ENCODE measurements at regions of chr22 and their contacts with region 1.

Region 1: GRCh38 chr22:28600546-28601143 is 79.0 kb downstream of the TTC28 start:
- DNase-seq: peak; percentile 73
- H3K4me3 ChIP-seq: no peak overlapping the region
- H3K27ac ChIP-seq: no peak overlapping the region
- H3K4me1 ChIP-seq: peaks cover 8% of the 10 kb centered on the region
- H3K27me3 ChIP-seq: no peaks in the 10 kb centered on the region
- CTCF ChIP-seq: peak in 1 of 2 donors; percentile 10
- POLR2A ChIP-seq: no peak

Region 2: GRCh38 chr22:28051787-28052356 is 548.8 kb before region 1 on chr22:
- CTCF ChIA-PET with region 1: interaction called, 23 read pairs
- POLR2A ChIA-PET with region 1: no interaction called
- dilution Hi-C with region 1: no loop called
- intact Hi-C with region 1: no loop called
- DNase-seq: peak; percentile 66
- H3K4me3 ChIP-seq: no peak overlapping the region
- H3K27ac ChIP-seq: no peak overlapping the region
- H3K4me1 ChIP-seq: peaks cover 15% of the 10 kb centered on the region
- H3K27me3 ChIP-seq: no peaks in the 10 kb centered on the region
- CTCF ChIP-seq: peak; percentile 85
- POLR2A ChIP-seq: no peak

Region 3: DNA sequence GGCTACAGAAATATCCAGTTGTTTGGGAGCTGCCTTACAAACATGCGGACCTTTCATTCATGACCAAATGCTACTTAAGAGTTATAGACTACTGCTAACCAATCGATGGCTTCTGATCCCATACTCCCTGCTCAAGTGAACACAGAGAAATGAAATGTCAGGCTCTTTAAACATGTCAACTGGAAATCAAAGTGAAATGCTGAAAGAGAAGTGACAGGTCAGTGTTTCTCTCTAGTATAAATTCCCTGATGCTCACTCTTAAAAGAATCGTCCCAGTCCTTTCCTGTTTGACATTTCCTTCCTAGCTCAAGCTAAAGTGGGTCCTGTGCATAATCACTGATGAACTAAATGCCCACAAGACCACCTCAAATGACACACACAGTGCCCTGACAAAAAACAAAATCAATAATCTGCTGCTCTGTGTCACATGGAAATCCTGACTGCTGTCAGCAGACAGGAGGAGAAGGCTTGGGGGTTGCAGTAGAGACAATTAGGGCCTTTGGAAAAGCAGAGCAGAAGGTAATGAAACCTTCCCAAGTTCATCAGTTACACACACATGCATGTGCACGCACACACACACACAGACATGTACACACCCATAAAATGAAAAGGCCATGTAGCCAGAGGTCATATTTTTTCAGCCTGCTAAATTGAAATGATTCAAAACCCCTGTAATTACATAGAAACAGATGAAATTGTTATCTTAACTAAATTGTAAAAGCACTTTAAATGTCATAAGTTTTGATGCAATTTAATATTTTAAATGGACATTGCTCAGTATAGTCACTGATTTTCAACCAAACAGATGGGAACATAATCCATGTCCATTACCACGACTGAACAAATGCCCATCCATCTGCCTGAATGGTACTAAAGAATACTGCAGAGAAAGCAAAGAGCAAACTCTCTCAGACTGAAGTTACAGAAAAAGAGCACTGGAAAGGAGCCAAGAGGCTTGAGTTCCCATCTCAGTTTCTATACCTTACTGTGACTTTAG is 251.7 kb before region 1 on chr22:
- CTCF ChIA-PET with region 1: no interaction called
- POLR2A ChIA-PET with region 1: no interaction called
- dilution Hi-C with region 1: no loop called
- intact Hi-C with region 1: no loop called
- DNase-seq: no peak
- H3K4me3 ChIP-seq: no peak overlapping the region
- H3K27ac ChIP-seq: no peak overlapping the region
- H3K4me1 ChIP-seq: no peaks in the 10 kb centered on the region
- H3K27me3 ChIP-seq: no peaks in the 10 kb centered on the region
- CTCF ChIP-seq: no peak
- POLR2A ChIP-seq: no peak

Region 4: DNA sequence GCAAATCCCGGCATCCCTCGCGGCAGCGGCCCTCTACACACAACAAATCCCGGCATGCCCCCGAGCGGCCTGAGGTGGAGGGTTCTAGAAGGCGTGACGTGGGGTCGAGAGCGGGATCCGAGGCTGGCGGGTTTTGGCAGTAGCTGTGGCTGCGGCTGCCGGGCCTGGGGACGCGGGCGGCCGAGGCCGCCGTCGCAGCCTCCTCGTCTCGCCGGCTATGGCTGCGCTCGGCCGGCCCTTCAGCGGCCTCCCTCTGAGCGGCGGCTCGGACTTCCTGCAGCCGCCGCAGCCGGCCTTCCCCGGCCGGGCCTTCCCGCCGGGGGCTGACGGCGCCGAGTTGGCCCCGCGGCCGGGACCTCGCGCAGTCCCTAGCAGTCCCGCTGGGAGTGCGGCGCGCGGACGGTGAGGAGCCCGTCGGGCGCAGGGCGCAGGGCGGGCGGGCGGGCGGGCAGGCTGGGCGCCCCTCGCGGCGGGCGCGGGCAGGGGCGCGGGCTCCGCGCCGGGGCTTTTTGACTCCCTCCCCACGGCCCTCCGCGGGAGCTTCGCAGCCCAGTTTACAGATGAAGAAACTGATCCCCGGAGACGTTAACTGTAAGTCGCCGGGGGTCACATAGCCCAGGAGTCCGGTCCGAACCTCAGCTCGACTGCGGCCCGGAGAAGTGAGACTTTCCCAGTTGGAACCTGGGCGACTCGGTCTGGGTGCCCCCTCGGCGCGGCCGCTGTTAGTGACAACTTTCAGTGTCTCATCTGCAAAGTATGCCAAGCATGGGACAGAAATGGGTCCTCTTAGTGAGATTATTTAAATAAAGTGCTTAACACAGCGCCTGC is 172.2 kb after region 1 on chr22 and contains the start of gene CCDC117:
- CTCF ChIA-PET with region 1: interaction called, 23 read pairs
- POLR2A ChIA-PET with region 1: interaction called, 3 read pairs
- dilution Hi-C with region 1: no loop called
- intact Hi-C with region 1: loop called (anchors 2 kb)
- DNase-seq: peak; percentile 94
- H3K4me3 ChIP-seq: peak within 1 kb of the TSS; percentile 31 to 85 (median 51)
- H3K27ac ChIP-seq: peak within 1 kb of the TSS; percentile 79
- H3K4me1 ChIP-seq: peaks cover 4% of the 10 kb centered on the region
- H3K27me3 ChIP-seq: no peaks in the 10 kb centered on the region
- CTCF ChIP-seq: peak; percentile 28 to 37
- POLR2A ChIP-seq: peak; percentile 93
- total RNA-seq, gene CCDC117: 22.8 and 23.3 TPM in 2 replicates

Region 5: DNA sequence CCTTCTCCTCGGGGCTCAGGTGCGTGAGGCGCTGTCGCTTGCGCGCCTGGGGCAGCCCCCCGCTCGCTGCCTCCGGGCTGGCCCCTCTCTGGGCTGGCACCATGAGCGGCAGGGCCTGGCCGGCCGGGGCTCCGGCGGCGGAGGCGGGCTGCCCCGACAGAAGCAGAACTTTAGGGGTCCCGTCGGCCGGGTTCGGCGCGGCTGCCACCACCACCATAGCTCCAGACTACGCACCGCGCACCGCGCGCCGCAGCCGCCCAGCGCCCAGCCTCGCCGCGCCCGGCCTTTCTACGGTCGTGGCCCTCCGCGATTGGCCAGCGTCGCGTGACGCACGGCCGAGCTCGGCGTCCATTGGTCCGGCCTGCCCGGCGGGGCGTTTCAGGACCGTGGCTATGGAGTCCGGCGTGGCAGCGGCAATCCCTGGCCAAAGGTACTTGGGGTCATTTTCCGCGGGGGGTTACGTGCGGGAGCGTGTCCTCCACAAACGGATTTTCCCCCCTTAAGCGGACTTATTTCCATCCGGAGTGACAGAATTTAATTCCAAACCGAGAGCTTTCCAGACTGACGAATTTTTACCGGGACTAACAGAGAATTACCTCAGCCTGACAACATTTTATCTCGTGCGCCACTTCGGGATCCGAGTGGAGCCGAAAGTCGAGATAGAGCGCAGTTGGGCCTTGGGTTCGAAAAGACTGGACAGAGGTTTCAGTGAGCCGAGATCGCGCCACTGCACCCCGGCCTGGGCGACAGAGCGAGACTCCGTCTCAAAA is 199.8 kb after region 1 on chr22 and contains the start of gene XBP1:
- CTCF ChIA-PET with region 1: interaction called, 18 read pairs
- POLR2A ChIA-PET with region 1: no interaction called
- dilution Hi-C with region 1: no loop called
- intact Hi-C with region 1: no loop called
- DNase-seq: peak; percentile 95
- H3K4me3 ChIP-seq: peak within 1 kb of the TSS; percentile 84 to 100 (median 100)
- H3K27ac ChIP-seq: peak within 1 kb of the TSS; percentile 100
- H3K4me1 ChIP-seq: peaks cover 26% of the 10 kb centered on the region
- H3K27me3 ChIP-seq: no peaks in the 10 kb centered on the region
- CTCF ChIP-seq: no peak
- POLR2A ChIP-seq: peak; percentile 94
- total RNA-seq, gene XBP1: 90.4 and 103 TPM in 2 replicates

Region 6: GRCh38 chr22:28829358-28830181 is 228.9 kb after region 1 on chr22:
- CTCF ChIA-PET with region 1: interaction called, 246 read pairs
- POLR2A ChIA-PET with region 1: no interaction called
- dilution Hi-C with region 1: no loop called
- intact Hi-C with region 1: loop called (anchors 1 kb)
- DNase-seq: peak; percentile 72
- H3K4me3 ChIP-seq: no peak overlapping the region
- H3K27ac ChIP-seq: no peak overlapping the region
- H3K4me1 ChIP-seq: no peaks in the 10 kb centered on the region
- H3K27me3 ChIP-seq: no peaks in the 10 kb centered on the region
- CTCF ChIP-seq: peak; percentile 90 to 97
- POLR2A ChIP-seq: no peak

Region 7: GRCh38 chr22:29154364-29155048 is 553.9 kb after region 1 on chr22:
- CTCF ChIA-PET with region 1: interaction called, 15 read pairs
- POLR2A ChIA-PET with region 1: no interaction called
- dilution Hi-C with region 1: no loop called
- intact Hi-C with region 1: loop called (anchors 2 kb)
- DNase-seq: peak; percentile 74
- H3K4me3 ChIP-seq: no peak overlapping the region
- H3K27ac ChIP-seq: no peak overlapping the region
- H3K4me1 ChIP-seq: no peaks in the 10 kb centered on the region
- H3K27me3 ChIP-seq: peaks cover 0 to 14% of the 10 kb centered on the region in 2 experiments
- CTCF ChIP-seq: peak; percentile 81 to 98
- POLR2A ChIP-seq: no peak

Measured in endothelial cell of umbilical vein (primary cell).